Prostate gland (tissue), 2 donors: ENCODE measurements at regions of chr11 and their contacts with region 1.

Region 1: DNA sequence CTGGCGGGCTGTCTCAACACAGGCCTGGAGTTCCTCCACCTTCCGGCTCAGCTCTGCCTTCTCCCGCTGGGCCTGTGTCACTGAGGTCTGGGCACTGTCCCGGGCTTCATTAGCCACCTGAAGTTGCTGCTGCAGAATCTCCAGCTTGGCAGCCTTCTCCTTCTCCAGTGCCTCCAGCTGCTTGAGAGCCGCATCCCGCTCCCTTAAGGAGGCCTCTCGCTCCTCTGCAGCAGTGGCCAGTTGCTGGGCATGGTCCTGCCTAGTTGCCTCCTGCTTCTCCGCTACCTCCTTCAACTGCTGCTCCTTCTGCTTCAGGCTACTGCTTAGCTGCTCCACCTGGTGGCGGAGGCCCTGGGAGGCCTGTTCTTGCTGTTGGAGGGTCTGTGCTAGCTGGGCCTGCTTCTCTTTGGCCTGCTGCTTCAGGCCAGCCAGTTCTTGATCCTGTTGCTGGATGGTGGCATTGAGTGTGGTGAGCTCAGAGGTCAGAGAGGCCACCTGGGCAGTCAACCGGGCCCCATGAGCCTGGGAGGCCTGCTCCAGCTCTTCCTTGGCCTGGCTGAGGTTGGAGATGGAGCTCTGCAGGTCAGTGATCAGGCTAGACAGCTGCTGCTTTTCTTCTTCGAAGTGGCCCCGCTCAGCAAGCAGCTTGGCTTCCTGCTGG is 16.9 kb downstream of the IL18BP start:
- DNase-seq: no peak
- H3K4me3 ChIP-seq: no peak overlapping the region
- H3K27ac ChIP-seq: no peak overlapping the region
- H3K4me1 ChIP-seq: peaks cover 17% of the 10 kb centered on the region
- H3K27me3 ChIP-seq: no peaks in the 10 kb centered on the region
- CTCF ChIP-seq: peak in 2 of 4 experiments; percentile 15 to 19
- POLR2A ChIP-seq: no peak

Region 2: GRCh38 chr11:71563401-71563800 is 452.2 kb before region 1 on chr11:
- intact Hi-C with region 1: no loop called
- DNase-seq: no peak
- H3K4me3 ChIP-seq: no peak overlapping the region
- H3K27ac ChIP-seq: no peak overlapping the region
- H3K4me1 ChIP-seq: no peaks in the 10 kb centered on the region
- H3K27me3 ChIP-seq: no peaks in the 10 kb centered on the region
- CTCF ChIP-seq: no peak
- POLR2A ChIP-seq: no peak

Region 3: GRCh38 chr11:72238040-72238450 is 222.4 kb after region 1 on chr11:
- intact Hi-C with region 1: loop called (anchors 10 kb)
- DNase-seq: no peak
- H3K4me3 ChIP-seq: no peak overlapping the region
- H3K27ac ChIP-seq: peak overlapping the region in 1 of 2 donors; percentile 14
- H3K4me1 ChIP-seq: peaks cover 3% of the 10 kb centered on the region
- H3K27me3 ChIP-seq: peaks cover 2% of the 10 kb centered on the region
- CTCF ChIP-seq: peak; percentile 35 to 55 (median 46)
- POLR2A ChIP-seq: no peak

Region 4: GRCh38 chr11:73795925-73796632 is 1780.4 kb after region 1 on chr11:
- intact Hi-C with region 1: no loop called
- DNase-seq: no peak
- H3K4me3 ChIP-seq: no peak overlapping the region
- H3K27ac ChIP-seq: no peak overlapping the region
- H3K4me1 ChIP-seq: no peaks in the 10 kb centered on the region
- H3K27me3 ChIP-seq: no peaks in the 10 kb centered on the region
- CTCF ChIP-seq: no peak
- POLR2A ChIP-seq: no peak